A673 (cell line): ENCODE measurements at regions of chr2 and their contacts with region 1.

Region 1: DNA sequence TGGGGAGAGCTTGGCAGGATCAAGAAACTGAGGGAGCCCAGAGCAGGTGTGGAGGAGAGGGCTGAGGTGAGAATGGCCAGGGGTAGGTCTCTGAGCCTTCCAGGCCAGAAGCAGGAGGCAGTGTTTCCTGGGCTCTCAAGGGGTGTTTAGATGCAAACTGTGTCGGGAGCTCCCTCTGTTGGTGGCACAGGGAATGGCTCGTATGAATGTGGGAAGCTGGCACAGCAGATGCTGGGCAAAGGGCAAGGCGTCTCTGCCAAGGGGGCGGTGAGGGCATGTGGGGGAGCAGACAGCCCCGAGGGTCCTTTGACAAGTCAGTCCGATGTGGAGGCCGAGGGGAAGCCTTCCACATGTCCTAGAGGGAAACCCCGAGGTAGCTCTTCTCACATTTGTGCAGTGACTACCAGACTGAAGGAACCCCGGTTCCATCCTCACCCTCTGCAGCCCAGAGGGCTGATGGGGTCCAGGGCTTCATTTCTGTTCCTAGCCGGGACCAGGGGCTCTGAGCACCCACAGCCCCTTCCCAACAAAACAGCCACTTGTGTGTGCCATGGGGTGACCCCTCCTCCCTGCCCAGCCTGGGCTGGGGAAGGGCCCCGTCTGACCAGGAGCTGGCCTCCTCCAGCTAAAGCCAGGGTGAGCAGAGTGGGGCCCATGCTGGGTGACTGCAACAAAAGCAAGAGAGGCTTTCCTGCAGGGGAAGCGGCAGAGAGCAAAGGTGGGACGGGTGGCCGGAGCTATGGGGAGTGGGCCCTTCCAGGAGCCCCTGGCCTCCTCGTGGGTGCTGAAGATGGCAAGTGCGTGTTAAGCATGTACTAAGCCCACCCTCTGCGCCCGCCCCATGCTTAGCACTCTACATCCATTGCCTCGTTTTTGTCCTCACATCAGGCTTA is 103.4 kb downstream of the SEPTIN10 start:
- DNase-seq: peak; percentile 79
- H3K4me3 ChIP-seq: no peak overlapping the region
- H3K27ac ChIP-seq: no peak overlapping the region
- H3K4me1 ChIP-seq: no peaks in the 10 kb centered on the region
- H3K27me3 ChIP-seq: no peaks in the 10 kb centered on the region
- CTCF ChIP-seq: peak; percentile 91

Region 2: DNA sequence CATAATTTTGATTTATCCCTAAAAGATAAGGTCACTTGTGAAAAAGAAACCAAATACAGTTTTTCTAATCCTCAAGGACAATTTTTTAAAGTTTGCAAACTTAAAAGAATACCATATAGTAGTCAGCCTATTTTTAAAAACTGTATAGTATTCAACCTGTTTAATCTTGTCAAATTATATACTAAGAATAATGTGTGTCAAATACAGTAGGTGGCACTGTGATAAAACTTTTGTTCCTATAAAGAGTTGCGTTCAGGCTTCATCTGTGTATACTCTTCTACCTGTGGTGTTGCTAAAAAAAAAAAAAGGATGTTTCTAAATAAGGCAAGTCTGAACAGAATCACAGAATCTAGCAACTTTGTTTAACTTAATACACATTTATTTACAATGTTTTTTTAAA is 655.2 kb before region 1 on chr2:
- CTCF ChIA-PET with region 1: no interaction called
- POLR2A ChIA-PET with region 1: no interaction called
- intact Hi-C with region 1: loop called (anchors 10 kb)
- DNase-seq: peak; percentile 15
- H3K4me3 ChIP-seq: no peak overlapping the region
- H3K27ac ChIP-seq: no peak overlapping the region
- H3K4me1 ChIP-seq: no peaks in the 10 kb centered on the region
- H3K27me3 ChIP-seq: no peaks in the 10 kb centered on the region
- CTCF ChIP-seq: peak; percentile 34; the same call in 1 of the 2 replicates

Region 3: GRCh38 chr2:108927936-108928659 is 582.3 kb before region 1 on chr2:
- CTCF ChIA-PET with region 1: no interaction called
- POLR2A ChIA-PET with region 1: no interaction called
- intact Hi-C with region 1: loop called (anchors 5 kb)
- DNase-seq: peak; percentile 58
- H3K4me3 ChIP-seq: no peak overlapping the region
- H3K27ac ChIP-seq: no peak overlapping the region
- H3K4me1 ChIP-seq: peaks cover 6% of the 10 kb centered on the region
- H3K27me3 ChIP-seq: no peaks in the 10 kb centered on the region
- CTCF ChIP-seq: peak; percentile 88

Region 4: GRCh38 chr2:109128048-109128465 is 382.3 kb before region 1 on chr2:
- CTCF ChIA-PET with region 1: interaction called, 13 read pairs
- POLR2A ChIA-PET with region 1: no interaction called
- intact Hi-C with region 1: loop called (anchors 1 kb)
- DNase-seq: peak; percentile 85
- H3K4me3 ChIP-seq: peak overlapping the region; percentile 53
- H3K27ac ChIP-seq: no peak overlapping the region
- H3K4me1 ChIP-seq: peaks cover 12% of the 10 kb centered on the region
- H3K27me3 ChIP-seq: peaks cover 55% of the 10 kb centered on the region
- CTCF ChIP-seq: peak; percentile 94

Region 5: DNA sequence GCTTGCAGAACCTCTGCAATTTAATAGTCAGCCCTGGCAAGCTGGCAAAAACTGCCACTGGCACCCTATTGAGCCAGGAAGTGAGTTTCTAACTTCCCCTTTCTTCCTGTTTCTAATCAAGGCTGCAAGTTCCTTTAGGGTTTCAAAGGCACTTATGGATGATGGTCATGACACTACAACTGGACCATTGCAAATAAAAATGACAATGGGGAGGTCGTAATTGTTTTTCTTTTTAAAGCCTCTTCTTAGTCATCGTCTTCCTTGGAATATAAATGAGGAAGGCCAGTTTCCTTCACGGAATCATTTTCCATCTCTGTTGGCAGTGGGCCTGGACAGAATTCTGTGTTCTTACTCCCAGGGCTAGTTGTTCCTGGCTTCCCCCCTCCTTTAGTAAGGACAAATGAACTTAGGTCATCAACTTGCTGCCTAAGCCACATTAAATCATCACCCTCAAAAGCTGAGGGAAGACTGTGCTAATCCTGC is 345.6 kb before region 1 on chr2:
- CTCF ChIA-PET with region 1: no interaction called
- POLR2A ChIA-PET with region 1: no interaction called
- intact Hi-C with region 1: no loop called
- DNase-seq: no peak
- H3K4me3 ChIP-seq: no peak overlapping the region
- H3K27ac ChIP-seq: no peak overlapping the region
- H3K4me1 ChIP-seq: no peaks in the 10 kb centered on the region
- H3K27me3 ChIP-seq: no peaks in the 10 kb centered on the region
- CTCF ChIP-seq: no peak

Region 6: DNA sequence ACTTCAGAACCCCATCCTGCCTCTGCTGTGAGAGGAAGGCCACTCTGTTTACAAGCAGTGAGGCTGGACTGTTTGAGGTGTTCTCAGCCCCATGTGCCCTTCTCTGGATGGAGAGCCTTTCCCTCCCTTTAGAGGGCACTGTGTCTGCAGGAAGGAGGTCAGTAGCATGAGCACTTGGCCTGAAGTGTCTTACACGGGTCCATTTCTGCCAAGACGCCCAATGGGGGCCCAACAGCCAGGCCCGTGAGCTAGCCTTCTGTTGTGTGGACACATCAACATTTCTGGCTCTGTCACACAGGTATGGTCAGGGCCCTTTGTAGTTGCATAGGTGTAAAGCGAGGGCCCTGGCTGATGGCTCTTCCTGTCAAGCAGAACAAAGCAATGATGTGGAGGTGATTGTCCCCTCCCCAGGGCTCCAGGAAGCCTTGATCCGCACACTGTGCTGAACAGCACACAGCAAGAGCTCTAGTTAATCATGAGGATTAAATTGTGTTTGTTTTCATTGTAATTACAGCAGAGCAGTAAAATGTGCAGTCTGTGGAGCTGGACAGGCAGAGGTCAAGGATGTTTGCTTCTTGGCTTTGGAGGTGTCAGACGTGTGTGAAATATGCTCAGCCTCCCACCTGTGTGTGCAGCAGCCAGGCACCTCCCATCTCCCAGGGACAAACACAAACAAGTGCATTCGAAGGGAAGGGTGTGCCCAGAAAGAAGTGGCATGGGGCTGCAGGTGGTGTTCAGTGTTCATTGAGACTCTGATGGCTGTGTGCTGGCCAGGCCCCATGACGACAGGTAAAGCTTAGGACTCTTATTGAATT is 249.3 kb before region 1 on chr2:
- CTCF ChIA-PET with region 1: no interaction called
- POLR2A ChIA-PET with region 1: no interaction called
- intact Hi-C with region 1: loop called (anchors 10 kb)
- DNase-seq: no peak
- H3K4me3 ChIP-seq: no peak overlapping the region
- H3K27ac ChIP-seq: no peak overlapping the region
- H3K4me1 ChIP-seq: peaks cover 4% of the 10 kb centered on the region
- H3K27me3 ChIP-seq: peaks cover 2% of the 10 kb centered on the region
- CTCF ChIP-seq: 0 out of 2 replicates have a peak, but pooled peaks have one; percentile 9

Region 7: GRCh38 chr2:109290887-109291643 is 219.3 kb before region 1 on chr2:
- CTCF ChIA-PET with region 1: no interaction called
- POLR2A ChIA-PET with region 1: no interaction called
- intact Hi-C with region 1: no loop called
- DNase-seq: no peak
- H3K4me3 ChIP-seq: no peak overlapping the region
- H3K27ac ChIP-seq: no peak overlapping the region
- H3K4me1 ChIP-seq: no peaks in the 10 kb centered on the region
- H3K27me3 ChIP-seq: no peaks in the 10 kb centered on the region
- CTCF ChIP-seq: no peak